ENCODE measurements at regions of chr3 and their contacts with region 1.

Region 1: DNA sequence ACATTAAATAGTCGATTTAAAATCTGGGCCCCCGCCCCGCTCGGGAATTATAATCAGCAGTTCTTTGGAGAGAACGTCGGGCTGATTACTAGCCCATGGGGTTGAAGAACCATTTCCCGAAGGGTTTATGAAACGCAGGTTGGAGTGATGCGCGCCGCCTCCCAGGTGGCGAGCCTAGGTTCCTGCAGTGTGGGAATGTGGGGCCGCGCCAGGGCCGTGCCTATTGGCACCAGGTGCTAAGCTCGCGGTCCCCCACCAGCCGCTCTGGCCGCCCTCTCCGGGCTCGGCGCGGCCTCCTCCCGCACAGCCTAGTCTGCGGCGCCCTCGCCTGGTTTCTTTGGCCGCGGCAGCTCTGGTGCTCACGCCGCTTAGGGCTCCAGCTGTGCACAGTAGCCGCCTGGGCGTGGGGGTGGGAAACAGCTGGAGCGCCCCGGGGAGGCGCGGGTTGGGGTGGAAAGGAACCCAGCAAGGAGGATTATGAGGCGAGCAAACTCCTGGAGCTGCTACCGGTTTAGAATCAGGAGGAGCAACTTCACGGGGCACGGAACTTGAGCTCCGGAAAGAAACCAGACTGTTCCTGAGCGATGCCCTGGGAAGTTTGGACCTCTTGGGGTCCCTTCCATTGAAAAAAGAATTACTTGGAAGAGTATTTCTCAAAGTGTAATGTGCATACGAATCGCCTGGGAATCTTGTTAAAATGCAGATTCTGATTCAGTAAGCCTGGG is 5.6 kb upstream of the MECOM start:
- DNase-seq: peak; percentile 75 to 86 (median 79)
- ATAC-seq: peak; percentile 98 to 99 (median 98)
- H3K4me3 ChIP-seq: peak overlapping the region; percentile 1 to 68 (median 58)
- H3K27ac ChIP-seq: peak overlapping the region; percentile 1 to 78 (median 58)
- H3K4me1 ChIP-seq: peaks cover 0 to 28% (median 7%) of the 10 kb centered on the region in 12 donors
- H3K27me3 ChIP-seq: peaks cover 8 to 92% (median 52%) of the 10 kb centered on the region in 9 donors
- CTCF ChIP-seq: peak; percentile 67 to 93 (median 82)
- POLR2A ChIP-seq: peak in 1 of 2 donors; percentile 11

Region 2: DNA sequence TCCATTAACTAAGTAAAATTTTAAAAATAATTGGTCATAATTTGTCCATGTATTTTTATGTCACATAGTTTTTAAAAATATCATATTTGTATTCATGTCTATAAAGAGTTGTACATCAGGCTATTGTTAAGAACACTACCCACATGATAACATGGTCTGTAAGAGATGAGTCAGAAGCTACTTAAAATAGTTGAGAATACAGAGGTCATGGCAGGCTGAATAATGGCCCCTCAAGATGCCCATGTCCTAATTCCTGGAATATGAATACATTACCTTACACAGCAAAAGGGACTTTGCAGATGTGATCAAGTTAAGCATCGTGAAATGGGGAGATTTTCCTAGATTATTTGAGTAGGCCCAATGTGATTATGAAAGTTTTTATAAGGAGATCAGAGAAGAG is 790.5 kb before region 1 on chr3:
- intact Hi-C with region 1: loop called in 1 of 10 experiments (anchors 10 kb)
- DNase-seq: no peak
- ATAC-seq: peak in 2 of 4 donors; percentile 71 to 78
- H3K4me3 ChIP-seq: no peak overlapping the region
- H3K27ac ChIP-seq: peak overlapping the region in 5 of 12 donors; percentile 37 to 76 (median 72)
- H3K4me1 ChIP-seq: peaks cover 0 to 41% (median 7%) of the 10 kb centered on the region in 12 donors
- H3K27me3 ChIP-seq: no peaks in the 10 kb centered on the region
- CTCF ChIP-seq: no peak
- POLR2A ChIP-seq: no peak

Region 3: DNA sequence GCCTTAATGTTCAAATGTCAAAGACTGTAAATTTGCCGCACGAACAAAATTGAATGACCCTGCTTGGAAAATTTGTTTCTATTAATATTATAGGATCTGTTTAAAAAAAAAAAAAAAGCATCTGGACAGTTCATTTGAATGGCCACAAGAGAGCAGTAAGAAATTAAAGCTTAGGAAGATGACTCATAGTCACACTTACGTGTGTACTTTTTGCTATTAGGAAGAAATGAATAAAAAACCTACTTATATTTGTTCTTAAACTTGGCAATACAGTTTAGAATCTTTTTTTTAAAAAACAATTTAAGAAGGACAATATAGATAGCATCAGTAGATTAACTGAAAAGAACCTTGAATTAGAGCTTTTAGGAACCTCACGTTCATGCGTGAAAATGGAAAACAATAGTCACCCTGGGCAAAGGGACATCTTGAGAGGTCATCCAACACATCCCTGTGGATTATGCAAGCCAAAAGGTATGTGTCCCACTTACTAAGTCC is 627.4 kb before region 1 on chr3:
- intact Hi-C with region 1: loop called in 9 of 10 experiments (anchors 5 to 10 kb)
- DNase-seq: no peak
- ATAC-seq: peak in 2 of 4 donors; percentile 64 to 68
- H3K4me3 ChIP-seq: peak overlapping the region in 5 of 12 donors; percentile 13 to 30 (median 15)
- H3K27ac ChIP-seq: peak overlapping the region in 5 of 12 donors; percentile 19 to 54 (median 34)
- H3K4me1 ChIP-seq: peaks cover 0 to 6% (median 0%) of the 10 kb centered on the region in 12 donors
- H3K27me3 ChIP-seq: no peaks in the 10 kb centered on the region
- CTCF ChIP-seq: peak; percentile 40 to 73 (median 57)
- POLR2A ChIP-seq: no peak

Region 4: DNA sequence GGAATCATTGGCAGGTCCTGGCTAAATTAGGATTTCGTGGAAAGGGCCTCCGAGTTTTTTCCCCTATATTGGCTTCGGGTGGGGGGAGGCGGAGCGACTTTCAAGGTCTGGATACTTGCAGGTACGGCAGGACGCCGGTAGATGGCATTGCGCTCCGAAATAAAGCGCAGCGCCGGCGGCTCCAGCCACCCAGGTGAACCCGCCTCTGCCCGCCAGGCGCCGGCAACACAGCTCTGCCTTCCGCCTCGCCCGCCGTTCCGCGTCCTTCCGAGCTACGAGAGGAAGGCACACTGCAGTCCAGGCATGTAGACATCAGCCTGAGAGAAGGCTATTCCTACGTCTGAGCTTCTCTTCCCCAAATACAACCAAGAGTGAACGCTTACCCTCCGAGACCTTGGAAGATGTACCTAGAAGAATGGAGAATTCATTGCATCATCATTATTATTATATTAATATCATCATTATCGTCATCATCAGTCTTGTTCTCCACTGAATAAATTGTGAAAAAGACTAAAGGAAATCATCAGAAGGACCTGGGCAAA is 519.7 kb before region 1 on chr3:
- intact Hi-C with region 1: loop called in 7 of 10 experiments (anchors 1 to 5 kb)
- DNase-seq: peak; percentile 84 to 89 (median 85)
- ATAC-seq: peak; percentile 79 to 88 (median 84)
- H3K4me3 ChIP-seq: peak overlapping the region in 11 of 12 donors; percentile 1 to 72 (median 43)
- H3K27ac ChIP-seq: peak overlapping the region; percentile 47 to 90 (median 70)
- H3K4me1 ChIP-seq: peaks cover 0 to 44% (median 6%) of the 10 kb centered on the region in 12 donors
- H3K27me3 ChIP-seq: peaks cover 0 to 51% (median 31%) of the 10 kb centered on the region in 9 donors
- CTCF ChIP-seq: peak; percentile 64 to 93 (median 87)
- POLR2A ChIP-seq: no peak

Region 5: DNA sequence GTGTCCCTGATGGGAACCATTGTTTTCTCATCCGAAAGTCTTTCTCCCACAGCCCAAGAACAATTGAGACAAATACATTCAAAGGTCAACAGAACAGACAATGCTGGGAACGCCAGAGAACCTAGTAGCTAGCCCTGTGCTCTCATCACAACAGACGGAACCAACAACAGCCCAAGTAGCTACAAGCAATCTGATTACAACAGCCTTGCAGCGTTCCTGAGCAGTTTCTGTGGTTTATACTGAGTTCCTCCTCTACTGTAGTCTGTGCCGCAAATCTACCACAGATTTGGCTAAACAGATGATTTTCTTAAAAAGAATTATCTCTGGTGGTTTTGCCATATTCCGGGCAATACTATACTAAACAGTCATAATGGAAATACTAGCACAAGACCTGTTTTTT is 441.2 kb before region 1 on chr3:
- intact Hi-C with region 1: loop called in 3 of 10 experiments (anchors 5 to 10 kb)
- DNase-seq: peak in 1 of 5 donors; percentile 30
- ATAC-seq: peak in 3 of 4 donors; percentile 75 to 83 (median 80)
- H3K4me3 ChIP-seq: peak overlapping the region in 6 of 12 donors; percentile 2 to 20 (median 4)
- H3K27ac ChIP-seq: peak overlapping the region in 8 of 12 donors; percentile 5 to 54 (median 18)
- H3K4me1 ChIP-seq: peaks cover 0 to 20% (median 7%) of the 10 kb centered on the region in 12 donors
- H3K27me3 ChIP-seq: peaks cover 0 to 4% (median 0%) of the 10 kb centered on the region in 9 donors
- CTCF ChIP-seq: no peak
- POLR2A ChIP-seq: no peak

Region 6: GRCh38 chr3:169295126-169295525 is 374.0 kb before region 1 on chr3:
- intact Hi-C with region 1: loop called in 6 of 10 experiments (anchors 2 to 10 kb)
- DNase-seq: no peak
- ATAC-seq: no peak
- H3K4me3 ChIP-seq: no peak overlapping the region
- H3K27ac ChIP-seq: no peak overlapping the region
- H3K4me1 ChIP-seq: peaks cover 0 to 17% (median 0%) of the 10 kb centered on the region in 12 donors
- H3K27me3 ChIP-seq: no peaks in the 10 kb centered on the region
- CTCF ChIP-seq: peak; percentile 17 to 50 (median 38)
- POLR2A ChIP-seq: no peak

Region 7: DNA sequence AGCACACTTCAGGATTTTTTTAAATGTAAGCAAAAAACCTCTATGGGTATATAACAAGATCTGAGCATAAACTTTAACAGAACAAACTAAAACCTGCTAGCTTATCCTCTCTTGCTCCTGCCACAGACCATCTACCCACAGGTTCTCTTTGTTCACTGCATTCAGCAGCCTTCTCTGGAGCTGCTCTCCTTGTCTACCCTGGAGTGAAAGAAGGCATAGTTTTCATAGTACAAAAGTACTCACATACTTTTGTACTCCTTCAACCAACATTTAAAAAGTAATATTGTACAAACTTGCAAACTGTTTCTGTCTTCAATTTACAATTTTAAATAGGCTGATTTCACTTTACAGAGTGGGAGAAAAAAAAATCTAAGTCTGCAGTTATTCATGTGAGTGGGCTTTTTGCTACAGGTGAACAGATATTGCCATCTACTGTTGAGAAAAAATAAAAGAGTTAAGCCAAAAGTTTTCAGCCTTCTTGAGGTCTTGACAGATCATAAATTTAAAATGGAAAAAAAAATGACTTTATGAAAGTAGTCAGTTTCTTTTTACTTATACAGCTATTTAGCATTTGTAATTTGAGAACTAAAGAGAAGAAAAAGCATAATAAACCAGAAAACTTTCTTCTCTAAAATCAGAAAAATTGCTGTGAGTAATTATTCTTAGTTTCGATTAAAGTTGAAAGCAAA is 75.4 kb after region 1 on chr3:
- intact Hi-C with region 1: loop called in 1 of 10 experiments (anchors 5 kb)
- DNase-seq: no peak
- ATAC-seq: no peak
- H3K4me3 ChIP-seq: no peak overlapping the region
- H3K27ac ChIP-seq: no peak overlapping the region
- H3K4me1 ChIP-seq: peaks cover 0 to 4% (median 0%) of the 10 kb centered on the region in 12 donors
- H3K27me3 ChIP-seq: peaks cover 0 to 12% (median 3%) of the 10 kb centered on the region in 9 donors
- CTCF ChIP-seq: peak; percentile 25 to 64 (median 49)
- POLR2A ChIP-seq: no peak